CD4-positive, alpha-beta T cell (primary cell): ENCODE measurements at regions of chr18 and their contacts with region 1.

Region 1: DNA sequence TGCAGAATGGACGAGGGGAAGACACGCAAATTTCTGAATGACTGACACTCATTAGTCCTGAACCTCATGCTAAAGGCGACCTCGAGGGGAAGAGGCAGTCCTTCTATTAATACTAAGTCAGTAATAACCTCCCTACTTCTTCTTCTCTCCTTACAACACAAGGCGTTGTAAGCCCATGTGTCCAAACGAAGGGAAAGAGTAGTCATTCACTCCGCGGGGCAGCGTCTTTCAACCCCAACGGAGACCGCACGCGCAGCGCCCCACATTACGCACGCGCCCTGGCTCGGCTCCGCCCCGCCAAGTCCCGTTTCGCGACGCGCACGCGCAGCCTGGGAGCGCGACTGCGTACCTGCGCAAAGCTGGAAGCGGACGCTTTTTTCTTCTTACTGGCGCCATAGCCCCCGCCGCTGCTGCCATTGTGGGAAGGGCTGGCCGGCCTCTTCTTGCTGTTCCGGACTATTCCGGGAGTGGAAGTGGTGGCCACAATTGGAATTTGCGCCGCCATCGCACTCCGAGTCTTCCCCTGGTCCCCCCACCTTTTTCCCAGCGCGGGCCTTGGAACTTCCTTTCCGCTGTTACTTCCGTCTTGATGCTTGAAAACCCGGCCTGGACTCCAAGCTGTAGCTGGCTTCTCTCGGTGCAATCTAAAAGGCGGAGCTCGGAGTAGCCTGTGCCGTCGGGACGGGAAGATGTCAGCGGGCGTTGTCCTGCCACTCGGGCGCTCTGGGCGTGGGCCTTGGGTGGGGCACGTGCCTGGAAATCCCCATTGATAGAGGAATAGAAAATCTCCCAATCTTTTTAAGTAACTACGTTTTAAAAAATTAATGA is at the start of gene INO80C:
- DNase-seq: peak; percentile 83 to 98 (median 90)
- ATAC-seq: peak; percentile 88
- H3K4me3 ChIP-seq: peak within 1 kb of the TSS; percentile 85
- H3K4me3 Mint-ChIP-seq: peak within 1 kb of the TSS; percentile 98
- H3K27ac ChIP-seq: peak within 1 kb of the TSS; percentile 95 to 98
- H3K27ac Mint-ChIP-seq: peak within 1 kb of the TSS; percentile 99
- H3K4me1 ChIP-seq: peaks cover 17% of the 10 kb centered on the region
- H3K4me1 Mint-ChIP-seq: peaks cover 43% of the 10 kb centered on the region
- H3K27me3 ChIP-seq: no peaks in the 10 kb centered on the region
- H3K27me3 Mint-ChIP-seq: no peaks in the 10 kb centered on the region
- CTCF ChIP-seq: no peak
- total RNA-seq, gene INO80C: 13.0 to 16.0 TPM

Region 2: GRCh38 chr18:34976899-34977837 is 520.4 kb before region 1 on chr18:
- CTCF ChIA-PET with region 1: no interaction called
- POLR2A ChIA-PET with region 1: interaction called, 3 read pairs
- intact Hi-C with region 1: loop called in 1 of 2 experiments (anchors 5 kb)
- DNase-seq: peak; percentile 49 to 87 (median 75)
- ATAC-seq: peak; percentile 74
- H3K4me3 ChIP-seq: peak overlapping the region; percentile 97
- H3K4me3 Mint-ChIP-seq: peak overlapping the region; percentile 95
- H3K27ac ChIP-seq: no peak overlapping the region
- H3K27ac Mint-ChIP-seq: peak overlapping the region; percentile 39
- H3K4me1 ChIP-seq: peaks cover 35% of the 10 kb centered on the region
- H3K4me1 Mint-ChIP-seq: peaks cover 18% of the 10 kb centered on the region
- H3K27me3 ChIP-seq: peaks cover 0 to 5% of the 10 kb centered on the region in 2 experiments
- H3K27me3 Mint-ChIP-seq: peaks cover 9% of the 10 kb centered on the region
- CTCF ChIP-seq: no peak

Region 3: DNA sequence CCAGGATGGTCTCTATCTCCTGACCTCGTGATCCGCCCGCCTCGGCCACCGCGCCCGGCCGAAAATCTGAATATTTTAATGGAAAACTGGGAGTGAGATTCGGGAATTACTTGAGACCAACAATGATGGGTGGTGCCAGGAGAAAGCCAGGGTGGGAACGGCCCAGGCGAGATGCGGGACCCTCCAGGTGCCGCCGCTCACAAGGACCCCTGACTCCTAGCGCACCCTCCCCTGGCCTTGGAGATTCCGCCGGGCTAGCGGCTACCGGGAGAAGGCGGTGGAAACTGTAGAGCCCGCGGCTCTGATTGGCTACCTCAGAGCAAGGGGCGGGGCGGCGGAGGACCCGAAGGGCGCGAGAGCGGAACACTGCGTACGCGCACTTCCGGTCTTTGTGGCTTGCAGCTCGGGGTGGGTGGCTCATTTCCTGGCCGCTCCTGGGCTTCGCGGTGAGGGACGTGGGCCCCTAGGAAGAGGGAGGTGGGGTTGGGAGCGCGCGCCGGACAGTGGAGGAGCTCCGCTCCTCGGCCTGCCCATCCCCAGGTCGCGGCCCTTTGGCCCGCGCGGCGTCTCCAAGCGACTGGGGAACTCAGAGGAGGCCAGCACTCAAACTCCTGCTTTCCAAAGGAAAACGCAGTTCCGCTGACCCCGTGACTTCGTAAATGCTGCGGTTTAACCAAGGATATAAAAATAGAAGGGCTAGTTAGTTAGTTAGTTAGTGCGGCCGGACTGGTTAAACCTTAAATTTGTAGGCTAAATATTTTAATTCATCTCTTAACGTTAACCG is 256.7 kb before region 1 on chr18 and contains the start of gene ZNF397:
- CTCF ChIA-PET with region 1: no interaction called
- POLR2A ChIA-PET with region 1: no interaction called
- intact Hi-C with region 1: loop called (anchors 1 to 5 kb)
- DNase-seq: peak; percentile 87 to 97 (median 94)
- ATAC-seq: peak; percentile 96
- H3K4me3 ChIP-seq: peak within 1 kb of the TSS; percentile 83
- H3K4me3 Mint-ChIP-seq: peak within 1 kb of the TSS; percentile 98
- H3K27ac ChIP-seq: peak within 1 kb of the TSS; percentile 90 to 94
- H3K27ac Mint-ChIP-seq: peak within 1 kb of the TSS; percentile 99
- H3K4me1 ChIP-seq: peaks cover 9% of the 10 kb centered on the region
- H3K4me1 Mint-ChIP-seq: peaks cover 37% of the 10 kb centered on the region
- H3K27me3 ChIP-seq: no peaks in the 10 kb centered on the region
- H3K27me3 Mint-ChIP-seq: no peaks in the 10 kb centered on the region
- CTCF ChIP-seq: no peak
- total RNA-seq, gene ZNF397: 7.6 to 10.0 TPM

Region 4: DNA sequence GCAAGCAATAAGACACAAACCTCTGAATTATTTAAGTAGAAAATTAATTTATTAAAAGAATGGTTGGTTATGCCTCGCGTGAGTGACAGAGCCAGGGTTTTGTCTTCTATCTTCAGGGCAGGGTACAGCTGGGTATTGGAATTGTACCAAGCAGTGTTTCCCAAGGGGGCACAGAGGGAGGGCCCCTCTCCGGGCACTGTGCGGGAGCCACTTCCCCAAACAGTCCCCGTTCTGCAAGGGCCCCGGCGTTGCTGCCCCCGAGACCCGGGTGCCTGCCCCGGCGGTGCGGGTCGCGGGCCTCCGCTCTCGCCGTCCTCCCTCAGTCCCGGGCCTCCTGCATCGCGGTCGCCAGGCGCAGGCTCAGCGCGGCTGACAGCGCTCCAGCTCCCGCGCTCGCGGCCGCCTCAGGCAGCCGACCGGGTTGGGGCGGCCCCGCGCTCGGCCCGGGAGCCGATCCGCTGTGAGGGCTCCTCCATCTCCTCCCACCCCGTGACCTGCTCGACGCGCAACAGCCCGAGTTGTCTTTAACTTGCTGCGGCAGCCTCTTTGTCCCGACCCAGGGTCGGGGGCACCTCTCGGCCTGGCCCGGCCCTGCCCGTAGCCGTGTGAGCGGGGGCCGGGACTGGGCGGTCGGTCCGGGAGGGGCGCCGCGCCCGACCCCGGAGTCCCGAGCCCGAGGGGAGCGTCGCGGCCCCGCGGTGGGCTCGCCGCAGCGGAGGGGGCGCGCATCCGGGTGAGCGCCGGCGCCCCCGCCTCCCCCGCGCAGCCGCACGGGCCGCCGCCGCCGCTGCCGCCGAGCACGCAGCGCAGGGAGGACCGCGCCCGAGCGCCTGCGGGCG is 83.3 kb after region 1 on chr18:
- CTCF ChIA-PET with region 1: interaction called, 3 read pairs
- POLR2A ChIA-PET with region 1: interaction called, 32 read pairs
- intact Hi-C with region 1: loop called in 1 of 2 experiments (anchors 2 kb)
- DNase-seq: peak; percentile 21 to 84 (median 44)
- ATAC-seq: peak; percentile 75
- H3K4me3 ChIP-seq: peak overlapping the region; percentile 55
- H3K4me3 Mint-ChIP-seq: peak overlapping the region; percentile 63
- H3K27ac ChIP-seq: peak overlapping the region; percentile 26 to 42
- H3K27ac Mint-ChIP-seq: no peak overlapping the region
- H3K4me1 ChIP-seq: peaks cover 18% of the 10 kb centered on the region
- H3K4me1 Mint-ChIP-seq: peaks cover 35% of the 10 kb centered on the region
- H3K27me3 ChIP-seq: no peaks in the 10 kb centered on the region
- H3K27me3 Mint-ChIP-seq: peaks cover 13% of the 10 kb centered on the region
- CTCF ChIP-seq: no peak

Region 5: DNA sequence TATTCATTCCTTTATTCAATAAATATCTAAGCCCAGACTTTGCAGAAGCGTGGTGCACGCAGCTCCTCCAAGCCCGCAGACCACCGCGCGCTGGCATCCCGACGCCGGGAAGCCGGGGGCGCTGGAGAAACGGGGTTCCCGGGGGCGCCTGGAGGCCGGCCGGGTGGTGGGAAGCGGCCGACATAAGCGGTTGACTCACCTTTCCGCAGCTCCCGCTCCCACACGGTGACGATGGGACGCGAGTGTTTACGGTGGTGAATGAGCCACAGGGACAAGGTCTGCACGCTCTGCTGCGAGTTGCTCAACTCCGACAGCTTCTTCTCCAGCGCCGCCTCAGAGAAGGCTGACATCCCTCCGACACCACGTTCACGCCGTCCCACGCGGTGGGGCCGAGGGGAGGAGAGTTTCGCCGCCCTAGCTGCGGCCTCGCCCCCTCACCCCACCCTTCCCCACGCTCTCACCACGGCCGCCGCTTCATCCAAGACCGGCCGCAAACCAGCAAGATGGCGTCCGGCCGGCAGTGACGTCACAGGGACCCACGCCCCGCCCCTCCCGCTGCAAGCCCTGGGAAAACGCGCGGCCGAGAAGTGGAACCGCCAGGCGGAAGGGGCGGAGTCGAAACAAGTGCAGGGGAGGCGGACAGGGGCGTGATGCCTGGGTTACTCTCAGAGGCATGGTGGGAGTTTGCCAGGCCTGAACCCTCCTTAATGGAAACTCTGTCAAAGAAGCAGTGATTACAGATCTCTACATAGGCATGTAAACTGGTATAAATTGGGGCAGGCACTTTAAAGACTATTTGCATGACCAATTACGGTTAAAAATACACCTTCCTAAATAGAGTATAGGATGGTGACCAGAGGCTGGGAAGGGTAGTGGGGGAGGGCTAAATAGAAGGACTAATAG is 569.7 kb after region 1 on chr18 and contains the start of gene RPRD1A:
- CTCF ChIA-PET with region 1: no interaction called
- POLR2A ChIA-PET with region 1: no interaction called
- intact Hi-C with region 1: loop called (anchors 2 to 5 kb)
- DNase-seq: peak; percentile 92 to 98 (median 96)
- ATAC-seq: peak; percentile 94
- H3K4me3 ChIP-seq: peak within 1 kb of the TSS; percentile 96
- H3K4me3 Mint-ChIP-seq: peak within 1 kb of the TSS; percentile 91
- H3K27ac ChIP-seq: peak within 1 kb of the TSS; percentile 65 to 86
- H3K27ac Mint-ChIP-seq: peak within 1 kb of the TSS; percentile 91
- H3K4me1 ChIP-seq: peaks cover 17% of the 10 kb centered on the region
- H3K4me1 Mint-ChIP-seq: peaks cover 46% of the 10 kb centered on the region
- H3K27me3 ChIP-seq: no peaks in the 10 kb centered on the region
- H3K27me3 Mint-ChIP-seq: no peaks in the 10 kb centered on the region
- CTCF ChIP-seq: no peak
- total RNA-seq, gene RPRD1A: 21.8 to 25.1 TPM

Region 6: DNA sequence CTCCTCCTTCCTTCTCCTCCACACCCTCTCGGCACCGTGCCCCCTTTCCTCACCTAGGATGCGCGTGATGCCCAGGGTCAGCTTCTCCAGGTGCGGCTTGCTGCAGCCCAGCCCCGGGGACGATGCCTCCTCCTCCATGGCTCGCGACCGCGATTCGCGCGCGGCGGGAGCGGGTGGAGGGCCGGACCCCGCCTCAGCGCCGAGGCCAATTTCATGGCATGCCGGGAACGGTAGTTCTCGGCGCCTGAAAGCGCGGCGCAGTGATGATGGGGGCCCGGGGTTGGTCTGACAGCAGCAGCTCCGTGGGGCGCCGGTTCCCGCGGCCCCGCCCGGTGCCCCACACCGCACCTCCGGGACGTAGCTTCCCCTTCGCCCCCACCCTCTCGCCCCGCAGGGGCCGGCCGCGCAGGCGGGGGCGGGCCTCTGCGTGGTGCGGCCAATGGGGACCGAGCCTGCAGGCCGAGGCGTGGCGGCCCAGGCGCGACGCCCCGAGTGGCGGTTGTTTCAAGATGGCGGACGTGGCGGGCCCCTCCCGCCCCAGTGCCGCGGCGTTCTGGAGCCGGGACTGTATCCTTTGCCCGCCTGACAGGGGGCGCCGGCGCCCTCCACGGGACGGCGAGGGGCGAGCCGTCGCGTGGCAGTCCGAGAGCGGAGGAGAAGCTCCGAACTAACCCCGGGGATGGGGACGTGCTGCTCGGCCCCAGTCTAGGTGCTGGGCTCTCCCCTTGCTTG is 1331.2 kb after region 1 on chr18 and contains the starts of genes KIAA1328 and TPGS2:
- CTCF ChIA-PET with region 1: no interaction called
- POLR2A ChIA-PET with region 1: interaction called, 5 read pairs
- intact Hi-C with region 1: loop called in 1 of 2 experiments (anchors 10 kb)
- DNase-seq: peak; percentile 68 to 96 (median 83)
- ATAC-seq: peak; percentile 90
- H3K4me3 ChIP-seq: peak within 1 kb of the TSS; percentile 86
- H3K4me3 Mint-ChIP-seq: peak within 1 kb of the TSS; percentile 87
- H3K27ac ChIP-seq: peak within 1 kb of the TSS; percentile 58 to 78
- H3K27ac Mint-ChIP-seq: peak within 1 kb of the TSS; percentile 73
- H3K4me1 ChIP-seq: peaks cover 24% of the 10 kb centered on the region
- H3K4me1 Mint-ChIP-seq: peaks cover 60% of the 10 kb centered on the region
- H3K27me3 ChIP-seq: no peaks in the 10 kb centered on the region
- H3K27me3 Mint-ChIP-seq: no peaks in the 10 kb centered on the region
- CTCF ChIP-seq: peak; percentile 63
- total RNA-seq, gene KIAA1328: 8.7 to 9.4 TPM
- total RNA-seq, gene TPGS2: 16.4 to 19.0 TPM